Panc1 (cell line): ENCODE measurements at regions of chrX and their contacts with region 1.

Region 1: DNA sequence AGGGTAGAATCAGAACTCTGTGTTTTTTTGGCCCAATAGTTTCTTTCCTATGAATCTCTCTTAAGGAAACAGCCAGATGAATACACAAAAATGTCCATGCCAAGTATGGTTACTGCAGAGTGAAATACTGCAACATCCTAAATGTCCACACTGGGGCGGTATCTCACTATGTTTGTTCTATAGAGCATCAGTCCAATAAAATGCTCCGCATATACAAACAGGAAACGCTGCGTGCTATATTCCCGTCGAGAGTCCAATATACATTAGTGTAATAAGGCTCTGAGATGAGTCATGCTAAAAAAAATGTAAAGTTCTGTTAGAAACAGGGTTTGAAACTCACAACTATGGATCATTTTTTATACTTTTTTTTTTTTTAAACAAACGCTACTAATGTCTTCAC is 72.9 kb upstream of the ENOX2 start:
- DNase-seq: peak; percentile 22
- ATAC-seq: peak; percentile 88
- H3K4me3 ChIP-seq: no peak overlapping the region
- H3K27ac ChIP-seq: no peak overlapping the region
- H3K4me1 ChIP-seq: no peaks in the 10 kb centered on the region
- H3K27me3 ChIP-seq: peaks cover 6% of the 10 kb centered on the region; the same call in 1 of the 2 replicates
- CTCF ChIP-seq: peak; percentile 74

Region 2: DNA sequence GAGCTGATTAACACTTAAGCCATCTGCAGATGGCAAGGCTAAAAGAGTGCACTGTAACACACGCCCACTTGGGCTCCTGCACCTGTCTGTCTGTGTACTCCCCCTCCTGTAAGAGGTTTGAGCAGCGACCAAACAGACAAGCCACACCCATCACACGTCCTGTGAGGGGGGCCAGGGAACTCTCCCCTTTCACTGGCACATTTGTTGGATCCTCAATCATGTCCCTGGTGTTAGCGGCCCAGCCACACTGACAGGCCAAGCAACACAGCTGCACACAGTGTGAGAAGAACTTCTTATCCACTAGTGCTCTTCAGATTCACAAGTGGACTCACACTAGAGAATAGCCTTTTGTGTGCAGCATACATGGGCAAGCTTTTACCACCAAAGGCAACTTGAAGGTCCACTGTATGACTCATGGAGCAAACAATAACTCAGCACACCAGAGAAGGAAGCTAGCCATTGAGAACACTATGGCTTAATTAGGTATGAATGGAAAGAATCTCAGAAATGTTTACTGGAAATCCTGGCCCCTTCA is 1099.1 kb before region 1 on chrX:
- CTCF ChIA-PET with region 1: no interaction called
- POLR2A ChIA-PET with region 1: no interaction called
- in situ Hi-C with region 1: no loop called
- intact Hi-C with region 1: no loop called
- DNase-seq: no peak
- ATAC-seq: peak; percentile 60; the same call in 1 of the 2 replicates
- H3K4me3 ChIP-seq: no peak overlapping the region
- H3K27ac ChIP-seq: no peak overlapping the region
- H3K4me1 ChIP-seq: no peaks in the 10 kb centered on the region; the same call in 1 of the 2 replicates
- H3K27me3 ChIP-seq: no peaks in the 10 kb centered on the region
- CTCF ChIP-seq: no peak

Region 3: GRCh38 chrX:130497531-130497930 is 478.4 kb before region 1 on chrX:
- CTCF ChIA-PET with region 1: no interaction called
- POLR2A ChIA-PET with region 1: no interaction called
- in situ Hi-C with region 1: no loop called
- intact Hi-C with region 1: no loop called
- DNase-seq: no peak
- ATAC-seq: no peak
- H3K4me3 ChIP-seq: no peak overlapping the region
- H3K27ac ChIP-seq: no peak overlapping the region
- H3K4me1 ChIP-seq: no peaks in the 10 kb centered on the region
- H3K27me3 ChIP-seq: peaks cover 6% of the 10 kb centered on the region
- CTCF ChIP-seq: no peak

Region 4: DNA sequence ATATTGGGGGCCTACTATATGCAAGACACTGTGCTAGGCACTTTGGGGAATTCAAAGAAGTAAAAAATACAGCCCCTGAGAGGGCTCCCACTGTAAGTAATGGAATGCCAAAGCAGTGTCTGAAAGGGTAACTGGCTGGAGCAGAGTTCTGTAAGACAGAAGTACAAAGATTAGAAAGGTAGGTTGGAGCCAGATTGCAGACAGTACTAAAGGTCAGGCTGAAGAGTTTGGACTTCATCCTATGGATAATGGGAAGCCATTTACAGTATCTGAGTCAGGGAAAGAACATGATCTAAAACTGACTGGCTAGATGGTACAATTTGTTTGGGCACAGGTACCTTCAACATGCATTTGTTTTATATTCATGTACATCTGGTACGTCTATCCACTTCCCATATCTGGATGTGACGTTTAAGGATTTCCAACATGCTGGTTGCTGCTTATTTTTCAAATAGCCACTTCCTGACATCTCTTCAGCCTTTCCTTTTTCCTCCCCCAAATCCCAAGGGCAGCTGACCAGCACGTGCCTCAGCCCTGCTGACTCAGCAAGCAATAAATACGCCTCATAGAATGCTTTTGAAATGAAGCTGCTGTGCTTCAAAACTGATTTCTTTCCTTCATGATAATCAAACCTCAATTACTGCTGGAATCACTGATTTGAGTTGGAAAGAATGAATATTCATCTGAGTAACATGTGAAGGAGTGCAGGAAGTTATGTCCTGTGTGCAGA is 82.4 kb before region 1 on chrX:
- CTCF ChIA-PET with region 1: no interaction called
- POLR2A ChIA-PET with region 1: no interaction called
- in situ Hi-C with region 1: no loop called
- intact Hi-C with region 1: no loop called
- DNase-seq: no peak
- ATAC-seq: no peak
- H3K4me3 ChIP-seq: no peak overlapping the region
- H3K27ac ChIP-seq: no peak overlapping the region
- H3K4me1 ChIP-seq: no peaks in the 10 kb centered on the region
- H3K27me3 ChIP-seq: no peaks in the 10 kb centered on the region
- CTCF ChIP-seq: no peak

Region 5: DNA sequence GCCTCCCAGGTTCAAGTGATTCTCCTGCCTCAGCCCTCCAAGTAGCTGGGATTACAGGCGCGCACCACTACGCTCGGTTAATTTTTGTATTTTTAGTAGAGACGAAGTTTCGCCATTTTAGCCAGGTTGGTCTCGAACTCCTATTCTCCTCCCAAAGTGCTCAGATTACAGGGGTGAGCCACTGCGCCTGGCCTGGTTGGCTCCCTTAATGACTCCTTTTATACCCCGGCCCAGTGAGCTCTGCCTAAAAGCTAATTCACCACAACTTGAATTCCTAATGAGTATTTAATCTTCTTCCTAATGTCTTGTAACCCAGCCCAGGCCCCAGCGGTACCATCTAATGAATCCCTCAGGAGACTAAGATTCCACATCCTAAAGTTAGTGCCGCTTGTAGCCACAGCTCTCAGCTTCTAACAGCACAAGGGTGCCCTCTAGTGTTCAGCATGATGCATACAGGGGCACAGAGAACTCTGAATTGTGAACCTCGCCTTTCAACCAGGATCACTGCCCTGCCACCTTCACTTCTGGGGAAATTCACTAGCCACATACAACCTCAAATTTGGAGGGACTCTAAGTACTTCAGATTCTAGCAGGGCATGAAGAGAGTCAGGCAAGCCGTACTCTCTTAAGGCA is 657.5 kb after region 1 on chrX:
- CTCF ChIA-PET with region 1: no interaction called
- POLR2A ChIA-PET with region 1: no interaction called
- in situ Hi-C with region 1: no loop called
- intact Hi-C with region 1: loop called (anchors 5 kb)
- DNase-seq: peak; percentile 50
- ATAC-seq: peak; percentile 99
- H3K4me3 ChIP-seq: no peak overlapping the region
- H3K27ac ChIP-seq: no peak overlapping the region
- H3K4me1 ChIP-seq: no peaks in the 10 kb centered on the region
- H3K27me3 ChIP-seq: peaks cover 5% of the 10 kb centered on the region
- CTCF ChIP-seq: peak; percentile 86

Region 6: DNA sequence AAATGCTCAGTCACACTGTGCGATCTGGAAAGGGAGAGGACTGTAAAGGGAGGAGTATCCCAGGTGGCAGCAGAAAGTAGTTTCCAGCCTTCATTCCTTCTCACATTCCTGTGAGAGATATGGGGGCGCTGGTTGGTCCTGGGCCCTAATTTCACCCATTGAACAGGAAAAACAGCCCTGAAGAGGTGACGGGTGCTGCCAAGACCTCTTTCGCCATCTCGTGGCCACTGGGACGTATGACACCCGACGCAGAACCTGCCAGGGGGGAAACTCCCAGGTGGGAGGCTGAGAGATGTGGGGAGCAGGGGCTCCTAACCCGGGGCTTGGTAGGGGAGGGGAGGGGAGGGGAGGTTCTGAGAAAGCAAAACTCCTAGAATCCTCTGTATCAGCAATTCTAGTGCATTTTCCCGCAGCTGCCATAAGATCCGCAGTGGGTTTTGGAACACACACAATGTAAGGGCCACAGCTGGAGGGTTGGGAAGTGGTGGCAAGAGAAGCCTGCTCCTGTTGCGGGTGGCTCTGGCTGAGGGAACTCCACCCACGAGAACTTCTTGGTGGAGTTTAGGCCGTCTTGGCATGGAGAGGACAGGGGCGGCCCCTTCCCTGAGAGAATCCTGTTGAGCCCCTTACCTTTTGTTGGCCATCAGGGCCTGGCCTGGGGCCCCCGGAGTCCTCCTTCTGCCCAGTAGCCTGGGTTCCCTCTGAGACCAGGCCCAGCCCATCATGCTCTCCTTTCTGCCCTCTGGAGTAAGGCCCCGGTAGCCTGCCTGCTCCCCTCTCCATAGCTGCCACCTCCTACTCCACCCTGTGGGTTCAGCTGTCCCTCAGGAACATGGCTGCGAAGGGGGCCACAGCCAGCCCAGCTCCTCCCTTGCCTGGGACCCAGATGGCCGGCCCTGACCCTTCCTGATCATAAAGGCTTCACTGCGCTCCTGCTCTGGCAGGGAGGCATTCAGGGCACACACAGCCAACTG is 702.0 kb after region 1 on chrX:
- CTCF ChIA-PET with region 1: interaction called, 3 read pairs
- POLR2A ChIA-PET with region 1: no interaction called
- in situ Hi-C with region 1: no loop called
- intact Hi-C with region 1: loop called (anchors 2 kb)
- DNase-seq: peak; percentile 28
- ATAC-seq: peak; percentile 86
- H3K4me3 ChIP-seq: no peak overlapping the region
- H3K27ac ChIP-seq: no peak overlapping the region
- H3K4me1 ChIP-seq: no peaks in the 10 kb centered on the region
- H3K27me3 ChIP-seq: no peaks in the 10 kb centered on the region
- CTCF ChIP-seq: peak; percentile 93